ENCODE measurements at regions of chr3 and their contacts with region 1.

Region 1: GRCh38 chr3:159763602-159764489 is 224.8 kb upstream of the IL12A start:
- DNase-seq: peak; percentile 75 to 98
- H3K4me3 ChIP-seq: peak overlapping the region; percentile 61
- H3K27ac ChIP-seq: peak overlapping the region; percentile 84
- H3K4me1 ChIP-seq: peaks cover 42% of the 10 kb centered on the region
- H3K27me3 ChIP-seq: no peaks in the 10 kb centered on the region
- CTCF ChIP-seq: no peak; the same call in 1 of the 2 replicates

Region 2: DNA sequence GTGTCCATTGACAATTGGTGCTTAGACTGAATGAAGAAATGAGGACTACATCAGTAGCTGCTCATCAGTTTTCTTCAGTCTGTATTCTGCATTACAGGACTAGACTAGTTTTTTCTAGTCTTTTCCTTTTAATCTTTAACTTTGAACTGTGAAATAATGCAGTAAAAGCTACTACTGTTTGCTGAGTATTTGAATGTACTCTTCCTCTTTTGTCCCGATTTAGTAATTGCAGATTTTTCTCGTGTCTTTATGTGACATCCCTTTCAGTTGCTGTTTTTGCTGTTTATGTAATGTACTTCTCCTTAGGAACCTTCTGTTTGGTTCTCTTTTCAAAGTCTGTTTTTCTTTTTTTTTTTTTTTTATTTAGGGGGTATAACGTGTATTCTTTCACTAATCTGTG is 944.6 kb before region 1 on chr3:
- CTCF ChIA-PET with region 1: no interaction called
- POLR2A ChIA-PET with region 1: interaction called, 24 read pairs
- intact Hi-C with region 1: no loop called
- DNase-seq: no peak
- H3K4me3 ChIP-seq: no peak overlapping the region
- H3K27ac ChIP-seq: no peak overlapping the region
- H3K4me1 ChIP-seq: no peaks in the 10 kb centered on the region
- H3K27me3 ChIP-seq: no peaks in the 10 kb centered on the region
- CTCF ChIP-seq: no peak

Region 3: DNA sequence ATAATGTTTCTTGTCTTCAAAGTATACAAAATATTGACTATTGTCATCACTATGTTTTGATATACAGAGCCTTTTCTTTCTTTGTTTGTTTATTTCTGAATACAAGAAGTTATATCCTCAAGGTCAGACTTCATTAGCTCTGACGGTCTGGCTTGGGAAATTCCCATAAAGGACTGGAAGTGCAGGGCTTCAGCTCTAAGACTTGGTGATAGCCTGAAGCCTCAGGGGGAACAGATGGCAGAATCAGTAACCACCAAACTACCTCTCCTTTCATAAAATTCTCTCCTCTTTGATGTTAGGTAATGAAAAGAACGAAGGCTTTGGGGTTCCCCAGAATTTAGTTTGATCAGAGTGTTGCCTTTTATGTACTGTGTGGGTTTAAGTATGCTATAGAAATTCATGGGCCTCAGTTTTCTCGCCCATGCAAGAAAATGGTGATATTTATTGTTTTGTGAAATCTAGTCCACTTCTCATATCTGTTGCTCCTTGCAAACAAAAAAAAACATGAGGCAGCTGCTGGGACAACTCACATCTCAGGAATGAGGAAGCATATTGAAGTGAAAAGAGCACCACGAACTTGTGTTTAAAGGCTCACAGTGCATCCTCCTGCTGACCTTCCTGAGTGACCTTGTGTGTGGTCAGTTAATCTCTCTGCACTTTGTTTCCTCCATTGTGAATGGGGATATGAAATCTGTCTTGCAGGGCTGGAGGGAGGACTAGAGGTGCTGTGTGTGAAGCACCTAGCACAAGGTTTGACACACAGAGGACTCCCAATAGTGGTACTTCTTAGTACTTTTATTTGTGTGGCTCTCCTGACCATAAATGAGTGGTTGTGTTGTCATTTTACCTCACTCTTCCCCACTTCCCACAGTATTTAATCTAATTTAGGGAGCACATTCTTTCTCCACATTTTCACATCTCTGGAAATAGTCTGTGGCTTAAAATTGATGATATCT is 345.0 kb before region 1 on chr3:
- CTCF ChIA-PET with region 1: no interaction called
- POLR2A ChIA-PET with region 1: interaction called, 12 read pairs
- intact Hi-C with region 1: loop called (anchors 1 kb)
- DNase-seq: peak; percentile 73 to 91
- H3K4me3 ChIP-seq: no peak overlapping the region
- H3K27ac ChIP-seq: peak overlapping the region; percentile 82
- H3K4me1 ChIP-seq: peaks cover 26% of the 10 kb centered on the region
- H3K27me3 ChIP-seq: no peaks in the 10 kb centered on the region
- CTCF ChIP-seq: no peak

Region 4: GRCh38 chr3:159634483-159634882 is 129.4 kb before region 1 on chr3:
- CTCF ChIA-PET with region 1: interaction called, 3 read pairs
- POLR2A ChIA-PET with region 1: interaction called, 25 read pairs
- intact Hi-C with region 1: loop called (anchors 2 kb)
- DNase-seq: no peak
- H3K4me3 ChIP-seq: no peak overlapping the region
- H3K27ac ChIP-seq: no peak overlapping the region
- H3K4me1 ChIP-seq: peaks cover 63% of the 10 kb centered on the region
- H3K27me3 ChIP-seq: no peaks in the 10 kb centered on the region
- CTCF ChIP-seq: no peak

Region 5: DNA sequence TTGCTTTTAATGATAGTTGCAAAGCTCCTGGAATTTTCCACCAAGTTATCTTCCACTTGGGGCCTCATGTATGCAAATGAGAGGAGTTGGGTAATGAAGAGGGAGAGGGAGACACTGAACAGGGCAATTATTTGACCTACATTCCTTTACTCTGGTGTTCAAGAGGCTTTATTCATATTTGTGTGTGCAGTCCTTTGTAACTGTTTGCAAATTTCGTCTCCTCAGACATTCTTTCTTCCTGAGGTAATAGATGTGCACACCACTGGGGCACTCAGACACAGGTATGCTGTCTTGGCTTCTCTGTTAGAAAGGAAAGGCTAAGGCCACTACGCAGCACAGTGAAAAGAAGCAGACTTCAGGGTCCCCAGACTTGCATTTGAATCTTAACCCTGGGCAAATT is 35.1 kb after region 1 on chr3:
- CTCF ChIA-PET with region 1: interaction called, 4 read pairs
- POLR2A ChIA-PET with region 1: interaction called, 3 read pairs
- intact Hi-C with region 1: loop called (anchors 1 kb)
- DNase-seq: peak in 1 of 2 experiments; percentile 84
- H3K4me3 ChIP-seq: no peak overlapping the region
- H3K27ac ChIP-seq: peak overlapping the region; percentile 13; the same call in 1 of the 2 replicates
- H3K4me1 ChIP-seq: peaks cover 15% of the 10 kb centered on the region
- H3K27me3 ChIP-seq: no peaks in the 10 kb centered on the region
- CTCF ChIP-seq: no peak

Region 6: DNA sequence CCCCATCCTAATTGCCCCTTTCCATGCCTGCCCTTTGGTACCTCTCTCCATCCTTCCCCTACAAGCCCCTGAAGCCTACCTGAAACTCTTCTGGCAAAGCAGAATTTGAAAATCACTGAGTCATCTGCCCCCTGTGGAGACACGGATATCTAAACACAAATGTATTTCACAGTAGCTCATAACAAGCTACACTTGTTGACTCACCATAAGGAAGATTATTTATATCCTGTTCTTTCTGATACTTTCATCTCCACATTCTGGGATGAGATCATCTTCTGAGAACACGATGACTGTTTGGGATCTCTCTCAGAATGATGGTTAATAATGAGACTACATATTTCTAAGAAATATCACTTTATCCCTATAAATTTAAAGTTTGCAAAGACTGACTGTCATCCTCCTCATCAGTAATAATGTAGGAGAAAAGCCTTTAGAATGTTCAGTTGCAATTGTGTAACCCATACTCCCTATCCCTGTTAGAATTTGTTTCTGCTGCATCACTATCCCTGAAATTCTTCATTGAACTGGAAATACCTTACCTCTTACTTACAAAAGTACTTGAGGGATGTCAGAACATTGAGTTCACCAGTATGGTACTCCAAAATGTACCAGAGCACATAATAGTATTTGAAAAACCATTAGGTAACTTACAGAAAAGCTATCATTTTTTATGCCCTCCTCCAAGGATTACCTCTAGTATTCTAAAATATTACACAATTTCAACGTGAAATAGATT is 108.7 kb after region 1 on chr3:
- CTCF ChIA-PET with region 1: no interaction called
- POLR2A ChIA-PET with region 1: no interaction called
- intact Hi-C with region 1: loop called (anchors 1 kb)
- DNase-seq: peak; percentile 56 to 96
- H3K4me3 ChIP-seq: no peak overlapping the region
- H3K27ac ChIP-seq: peak overlapping the region; percentile 82
- H3K4me1 ChIP-seq: peaks cover 23% of the 10 kb centered on the region
- H3K27me3 ChIP-seq: no peaks in the 10 kb centered on the region
- CTCF ChIP-seq: peak; percentile 54; the same call in 1 of the 2 replicates

Region 7: DNA sequence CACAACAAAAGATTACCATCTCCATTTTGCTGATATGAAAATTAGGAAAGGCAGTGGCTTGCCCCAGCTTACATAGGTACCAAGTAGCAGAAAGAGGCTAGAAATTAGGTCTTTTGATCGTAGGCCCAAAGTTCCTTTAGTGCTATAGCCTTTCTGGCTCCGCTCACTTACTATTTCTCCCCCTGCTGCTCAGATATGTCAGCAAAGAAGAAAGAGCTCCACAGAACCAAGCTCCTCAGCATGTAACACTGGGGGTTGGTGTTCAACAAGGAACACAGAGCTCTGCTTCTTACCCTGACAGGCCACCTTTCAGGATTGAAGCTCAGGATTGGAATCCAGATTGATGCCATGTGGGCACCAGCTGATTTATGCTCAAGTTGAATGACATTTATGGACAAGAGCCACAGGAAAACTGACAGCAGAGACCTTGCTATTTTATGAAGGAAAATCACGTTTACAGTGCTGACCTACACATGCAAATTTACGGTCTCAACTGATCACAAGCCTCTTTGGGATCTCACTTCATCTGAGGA is 218.7 kb after region 1 on chr3:
- CTCF ChIA-PET with region 1: no interaction called
- POLR2A ChIA-PET with region 1: no interaction called
- intact Hi-C with region 1: no loop called
- DNase-seq: no peak
- H3K4me3 ChIP-seq: no peak overlapping the region
- H3K27ac ChIP-seq: no peak overlapping the region
- H3K4me1 ChIP-seq: no peaks in the 10 kb centered on the region
- H3K27me3 ChIP-seq: no peaks in the 10 kb centered on the region
- CTCF ChIP-seq: no peak

Region 8: DNA sequence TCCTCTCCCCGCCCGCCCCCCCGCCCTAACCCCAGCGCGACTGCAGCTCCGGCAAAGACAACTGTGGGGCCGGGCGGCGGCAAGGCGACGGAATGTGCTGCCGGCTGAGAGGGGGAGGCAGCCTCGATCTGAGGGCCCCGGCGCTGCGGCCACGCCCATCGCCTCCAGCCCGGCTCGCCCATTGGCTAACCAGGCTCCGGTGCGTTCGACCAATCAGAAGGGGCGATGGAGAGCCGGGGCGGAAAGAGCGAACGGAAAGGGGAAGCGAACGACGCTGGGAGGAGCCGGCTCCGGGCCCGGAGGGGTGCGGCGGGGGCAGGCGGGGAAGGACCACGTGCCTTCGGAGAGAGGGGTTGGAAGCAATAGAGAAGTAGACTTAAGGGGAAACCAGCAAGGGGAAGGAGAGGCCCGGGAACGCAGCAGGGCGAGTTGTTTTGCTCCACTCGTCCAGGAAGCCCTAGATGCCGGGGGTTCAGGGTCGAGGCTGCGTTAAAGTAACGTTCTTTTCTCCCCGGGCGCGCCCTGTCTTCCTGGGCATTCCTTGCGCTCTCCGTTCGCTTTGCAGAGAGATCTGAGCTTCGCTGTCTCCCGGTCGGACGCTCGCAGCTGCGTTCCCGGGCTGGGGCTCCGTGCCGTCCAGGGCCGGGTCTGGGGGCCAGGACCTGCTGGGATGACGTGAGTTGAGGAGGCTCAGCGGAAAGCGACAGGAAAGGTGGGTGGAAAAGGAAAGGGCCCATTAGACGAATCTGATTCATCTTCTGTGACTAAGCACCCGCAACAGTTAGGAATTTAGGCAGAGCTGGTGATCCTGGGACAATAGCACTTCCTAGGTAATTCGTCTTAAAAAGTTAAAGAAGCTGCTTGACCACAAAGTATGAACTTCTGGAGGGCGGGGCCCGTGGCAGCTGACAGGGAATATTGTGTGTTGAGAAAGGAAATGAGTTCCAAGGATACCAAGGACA is 801.9 kb after region 1 on chr3 and contains the start of gene KPNA4:
- CTCF ChIA-PET with region 1: no interaction called
- POLR2A ChIA-PET with region 1: no interaction called
- intact Hi-C with region 1: loop called (anchors 2 kb)
- DNase-seq: peak; percentile 94 to 99
- H3K4me3 ChIP-seq: peak within 1 kb of the TSS; percentile 86
- H3K27ac ChIP-seq: peak within 1 kb of the TSS; percentile 98
- H3K4me1 ChIP-seq: peaks cover 40% of the 10 kb centered on the region
- H3K27me3 ChIP-seq: no peaks in the 10 kb centered on the region
- CTCF ChIP-seq: no peak
- total RNA-seq, gene KPNA4: 49.2 and 61.0 TPM in 2 replicates

Region 9: GRCh38 chr3:160812304-160812703 is 1048.5 kb after region 1 on chr3:
- CTCF ChIA-PET with region 1: no interaction called
- POLR2A ChIA-PET with region 1: no interaction called
- intact Hi-C with region 1: no loop called
- DNase-seq: no peak
- H3K4me3 ChIP-seq: no peak overlapping the region
- H3K27ac ChIP-seq: no peak overlapping the region
- H3K4me1 ChIP-seq: no peaks in the 10 kb centered on the region
- H3K27me3 ChIP-seq: no peaks in the 10 kb centered on the region
- CTCF ChIP-seq: no peak

Measured in PC-9 (cell line).